Left cardiac atrium (tissue), 4 donors: ENCODE measurements at regions of chr18 and their contacts with region 1.

Region 1: GRCh38 chr18:56575819-56576663 is 62.4 kb downstream of the TXNL1 start:
- DNase-seq: no peak
- ATAC-seq: peak; percentile 82 to 92

Region 2: DNA sequence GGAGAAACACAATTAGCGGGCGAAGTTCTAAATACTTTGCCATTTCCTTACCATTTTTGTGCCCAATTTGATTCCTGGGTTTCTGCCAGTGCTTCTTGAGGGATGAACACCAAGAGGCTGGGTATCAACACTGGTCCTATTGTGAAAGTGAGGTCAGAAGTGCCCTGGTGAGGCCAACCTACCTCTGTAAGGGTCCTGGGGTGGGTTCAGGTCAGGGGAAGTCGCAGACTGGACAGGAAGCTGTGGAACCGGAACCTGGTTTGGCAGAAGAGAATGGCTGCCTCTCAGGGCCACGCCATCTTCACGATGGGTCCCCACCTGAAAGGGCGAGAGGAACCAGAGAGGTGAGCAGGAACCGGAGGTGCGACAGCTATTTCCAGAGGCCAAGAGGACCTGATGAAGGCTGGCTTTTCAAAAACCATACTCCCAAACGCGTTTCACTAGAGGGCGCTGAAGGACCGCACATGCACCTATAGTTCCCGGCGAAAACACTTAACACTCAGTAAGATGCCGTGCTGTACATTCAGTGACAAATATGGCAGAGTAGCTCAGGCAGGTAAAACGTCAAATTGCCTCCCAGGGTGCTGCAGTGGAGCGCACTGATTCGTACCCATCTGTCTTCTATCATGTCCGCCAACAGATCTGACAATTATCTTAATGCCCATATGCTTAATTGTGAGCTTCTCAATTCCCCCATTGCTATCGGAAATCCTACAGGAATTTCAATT is 1341.5 kb before region 1 on chr18:
- intact Hi-C with region 1: loop called in 1 of 2 experiments (anchors 2 kb)
- DNase-seq: peak; percentile 83
- ATAC-seq: peak; percentile 91 to 93

Region 3: DNA sequence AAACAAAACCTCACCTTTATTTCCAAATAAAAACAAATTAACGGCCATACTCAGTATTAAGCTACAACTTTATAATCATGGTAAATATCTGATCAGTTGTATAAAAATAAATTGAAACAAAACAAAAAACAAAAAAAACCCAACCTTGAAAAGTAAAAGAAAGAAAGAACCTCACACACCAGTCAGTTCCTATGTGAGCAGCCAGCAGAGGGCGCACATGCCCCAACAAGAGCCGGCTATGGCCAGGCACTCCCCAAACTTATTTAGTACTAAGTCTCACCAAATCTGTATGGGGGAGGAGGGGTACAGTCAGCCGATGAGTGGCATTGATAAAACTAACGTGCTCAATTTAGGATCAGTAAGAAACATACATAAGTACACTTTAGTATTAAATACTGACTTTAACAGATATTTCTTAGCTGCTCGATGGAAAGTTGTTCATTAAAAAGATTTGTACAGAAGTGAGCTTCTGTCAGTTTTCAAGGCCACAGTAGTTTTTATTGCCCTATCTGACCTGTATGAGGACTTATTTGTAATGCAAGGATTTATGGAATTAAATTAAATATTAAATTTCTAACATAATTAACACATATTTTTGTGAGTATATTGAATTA is 1160.7 kb before region 1 on chr18:
- intact Hi-C with region 1: loop called (anchors 5 to 10 kb)
- DNase-seq: peak; percentile 93
- ATAC-seq: peak; percentile 93 to 95

Region 4: DNA sequence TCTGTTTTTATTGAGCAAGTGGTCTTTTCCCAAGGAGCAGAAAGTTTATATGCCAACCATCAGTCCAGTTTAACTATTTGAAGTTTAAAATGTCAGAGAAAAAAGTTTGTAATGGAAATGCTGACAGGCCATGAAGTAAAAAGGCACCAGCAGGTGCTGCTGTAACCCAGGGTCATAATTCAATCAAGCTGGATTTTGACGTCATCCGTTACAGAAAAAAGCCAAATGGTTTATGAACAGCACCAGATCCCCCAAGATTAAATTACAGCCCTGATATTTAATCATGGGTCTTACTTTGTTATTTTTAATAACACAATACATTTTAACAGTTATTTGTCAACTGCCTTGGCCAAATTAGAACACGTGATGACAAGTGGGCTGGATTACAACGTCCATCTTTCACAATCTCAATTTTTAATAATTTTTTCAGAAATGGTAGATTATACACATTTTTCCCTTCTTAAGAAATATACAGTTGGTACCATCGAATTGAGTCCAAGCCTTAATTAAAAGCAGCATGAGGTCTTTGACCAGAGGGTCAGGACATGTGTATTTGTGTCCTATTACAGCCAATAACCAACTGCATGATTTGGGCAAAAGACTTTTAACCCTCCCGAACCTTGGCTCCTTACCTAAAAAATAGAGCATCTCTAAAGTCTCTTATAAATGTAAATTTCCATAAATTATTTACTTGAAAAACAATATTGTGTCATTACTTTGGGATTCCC is 998.1 kb before region 1 on chr18:
- intact Hi-C with region 1: loop called in 1 of 2 experiments (anchors 10 kb)
- DNase-seq: no peak
- ATAC-seq: no peak

Region 5: GRCh38 chr18:55781481-55781957 is 794.5 kb before region 1 on chr18:
- intact Hi-C with region 1: loop called in 1 of 2 experiments (anchors 10 kb)
- DNase-seq: peak; percentile 52
- ATAC-seq: peak; percentile 39 to 54

Region 6: GRCh38 chr18:55790296-55790695 is 785.7 kb before region 1 on chr18:
- intact Hi-C with region 1: loop called (anchors 10 kb)
- DNase-seq: no peak
- ATAC-seq: peak in 1 of 2 donors; percentile 41

Region 7: DNA sequence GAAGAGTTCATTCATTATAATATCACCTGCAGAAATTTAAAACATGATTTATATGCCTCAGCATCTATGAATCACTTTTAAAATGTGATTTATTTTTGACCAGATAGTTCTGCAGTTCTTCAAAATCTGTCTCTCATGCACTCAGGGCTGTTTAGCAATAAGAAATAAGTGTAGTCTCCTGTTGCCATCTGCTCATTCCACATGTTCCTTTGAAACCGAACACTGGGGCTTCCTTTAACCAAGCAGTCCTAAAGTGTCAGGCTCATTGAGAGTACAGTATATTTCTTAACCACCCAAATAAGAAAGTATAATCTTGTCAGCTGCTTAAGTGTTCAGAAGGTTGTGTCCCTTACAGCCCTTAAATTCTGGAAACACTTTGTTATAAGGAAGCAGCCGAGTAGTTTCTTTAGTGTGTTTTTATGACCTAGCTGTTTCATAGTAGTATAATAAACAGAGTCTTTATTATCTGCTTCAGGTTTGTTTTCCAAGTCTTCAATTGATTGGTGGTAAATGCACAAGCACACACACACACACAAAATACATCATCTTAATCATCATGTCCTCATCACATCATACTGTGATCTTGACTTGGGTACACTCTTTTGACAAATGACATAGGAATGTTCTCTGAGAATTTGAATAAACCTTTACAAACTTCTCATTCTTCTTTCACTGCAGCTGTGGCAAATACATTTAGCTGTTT is 85.5 kb after region 1 on chr18:
- intact Hi-C with region 1: no loop called
- DNase-seq: no peak
- ATAC-seq: no peak

Region 8: DNA sequence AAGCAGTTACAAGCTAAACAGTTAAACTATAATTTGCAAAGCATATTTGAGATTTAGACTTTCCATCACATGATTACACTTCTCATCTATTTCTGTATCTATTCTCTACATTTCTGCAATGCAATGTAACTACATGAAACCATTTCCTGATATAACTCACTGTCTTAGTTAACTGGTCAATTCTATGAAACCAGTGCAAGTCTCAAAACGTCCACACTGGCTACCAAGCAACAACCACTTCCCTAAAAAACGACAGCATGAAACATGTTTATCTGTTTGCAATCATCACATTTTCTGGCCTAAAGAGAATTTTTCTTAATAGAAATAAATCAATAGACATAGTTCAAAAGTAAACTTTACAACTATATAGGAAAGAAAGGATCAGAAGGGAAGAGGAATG is 993.1 kb after region 1 on chr18:
- intact Hi-C with region 1: no loop called
- DNase-seq: no peak
- ATAC-seq: no peak